CD4-positive, alpha-beta memory T cell (primary cell): ENCODE measurements at regions of chr3 and their contacts with region 1.

Region 1: GRCh38 chr3:189049438-189050236 is 122.1 kb upstream of the TPRG1 start:
- DNase-seq: peak; percentile 22 to 51 (median 36)
- H3K4me3 ChIP-seq: no peak overlapping the region
- H3K4me3 Mint-ChIP-seq: peak overlapping the region; percentile 26 to 80 (median 69)
- H3K27ac ChIP-seq: no peak overlapping the region
- H3K27ac Mint-ChIP-seq: peak overlapping the region; percentile 33 to 95 (median 88)
- H3K4me1 ChIP-seq: peaks cover 20% of the 10 kb centered on the region
- H3K4me1 Mint-ChIP-seq: peaks cover 13 to 29% (median 20%) of the 10 kb centered on the region in 4 donors
- H3K27me3 ChIP-seq: no peaks in the 10 kb centered on the region
- H3K27me3 Mint-ChIP-seq: peaks cover 0 to 3% of the 10 kb centered on the region in 2 donors

Region 2: DNA sequence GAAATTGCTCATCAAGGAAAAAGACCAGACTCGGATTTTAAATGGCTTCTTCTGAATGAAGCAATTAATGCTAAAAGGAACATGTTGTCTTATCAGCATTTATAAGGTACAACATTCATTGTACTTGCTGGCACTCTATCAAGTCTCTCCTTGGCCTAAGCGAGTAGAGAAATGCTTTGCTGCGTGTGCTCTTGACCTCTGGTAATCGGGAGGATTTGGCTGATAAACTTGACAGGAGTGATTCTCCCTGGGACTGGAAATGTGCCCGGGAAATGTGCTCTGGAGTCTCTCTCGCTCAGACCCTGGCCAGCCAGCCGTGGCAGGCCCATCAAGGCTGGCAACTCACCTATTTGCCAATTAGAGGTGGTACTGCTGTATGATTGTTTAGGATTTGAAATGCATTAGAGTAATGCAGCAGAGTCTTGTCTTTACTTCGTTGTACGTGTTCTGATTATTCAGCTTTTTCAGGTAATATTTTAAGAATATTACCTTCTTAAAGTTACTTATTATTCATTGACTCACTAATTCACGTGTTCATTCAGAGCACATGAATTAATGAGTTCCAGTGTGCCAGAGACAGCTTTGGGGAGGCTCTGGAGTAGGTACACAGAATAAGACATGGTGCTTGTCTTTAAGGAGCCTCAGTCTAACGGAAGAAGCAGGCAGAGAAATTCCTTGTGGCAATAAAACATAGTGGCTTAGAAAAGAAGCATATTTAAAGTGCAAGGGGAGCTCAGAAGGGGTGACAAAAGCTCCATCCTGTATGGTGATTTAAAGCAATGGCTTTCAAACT is 74.2 kb after region 1 on chr3:
- CTCF ChIA-PET with region 1: interaction called, 4 read pairs
- POLR2A ChIA-PET with region 1: interaction called, 21 read pairs
- intact Hi-C with region 1: no loop called
- DNase-seq: no peak
- H3K4me3 ChIP-seq: no peak overlapping the region
- H3K4me3 Mint-ChIP-seq: peak overlapping the region in 6 of 8 donors; percentile 73 to 85 (median 78)
- H3K27ac ChIP-seq: no peak overlapping the region
- H3K27ac Mint-ChIP-seq: peak overlapping the region in 5 of 7 donors; percentile 7 to 93 (median 72)
- H3K4me1 ChIP-seq: peaks cover 45% of the 10 kb centered on the region
- H3K4me1 Mint-ChIP-seq: peaks cover 16 to 66% (median 34%) of the 10 kb centered on the region in 4 donors
- H3K27me3 ChIP-seq: no peaks in the 10 kb centered on the region
- H3K27me3 Mint-ChIP-seq: no peaks in the 10 kb centered on the region